ENCODE measurements at regions of chr5 and their contacts with region 1.

Region 1: DNA sequence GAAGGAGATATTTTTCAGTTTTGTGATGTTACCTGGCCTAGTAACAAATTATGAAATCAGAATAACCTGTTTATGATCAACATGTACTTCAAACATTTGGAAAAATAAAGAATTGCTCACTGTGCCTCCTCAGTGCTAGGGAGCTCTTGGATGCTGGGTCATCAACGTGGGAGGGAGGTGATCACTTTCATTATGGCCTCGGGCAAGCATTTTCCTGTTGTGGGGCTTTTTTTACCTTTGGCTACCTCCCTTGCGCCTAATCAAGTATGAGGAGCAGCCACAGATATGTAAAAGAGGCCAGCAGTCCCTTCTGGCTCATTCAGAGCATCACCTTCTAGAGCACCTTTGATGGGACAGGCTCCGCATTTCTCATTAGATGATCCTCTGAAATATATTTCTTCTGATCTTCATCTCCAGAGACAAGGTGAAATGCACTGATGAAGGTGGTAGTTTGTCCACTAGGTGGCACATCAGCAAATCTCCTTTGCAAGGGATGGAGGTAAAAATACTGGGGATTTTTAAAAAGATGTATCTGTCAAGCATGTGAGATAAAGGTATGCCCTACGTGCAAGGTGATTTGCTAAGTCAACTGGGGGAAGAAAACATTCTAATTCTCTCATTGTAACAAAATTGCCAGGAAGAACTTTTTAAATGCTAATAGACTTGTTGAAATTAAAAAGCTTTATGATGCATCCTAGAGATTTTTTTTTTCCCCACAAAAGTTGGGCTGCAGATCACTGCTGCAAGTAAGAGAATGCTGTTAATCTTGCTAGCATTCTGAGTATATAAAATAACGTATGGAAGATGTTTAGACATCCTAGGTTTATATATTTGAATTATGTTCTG is 218.2 kb downstream of the MAST4 start:
- DNase-seq: peak; percentile 66
- H3K4me3 ChIP-seq: peak overlapping the region in 1 of 3 experiments; percentile 3
- H3K27ac ChIP-seq: no peak overlapping the region
- H3K4me1 ChIP-seq: peaks cover 6% of the 10 kb centered on the region
- H3K27me3 ChIP-seq: no peaks in the 10 kb centered on the region
- CTCF ChIP-seq: peak; percentile 73 to 78

Region 2: DNA sequence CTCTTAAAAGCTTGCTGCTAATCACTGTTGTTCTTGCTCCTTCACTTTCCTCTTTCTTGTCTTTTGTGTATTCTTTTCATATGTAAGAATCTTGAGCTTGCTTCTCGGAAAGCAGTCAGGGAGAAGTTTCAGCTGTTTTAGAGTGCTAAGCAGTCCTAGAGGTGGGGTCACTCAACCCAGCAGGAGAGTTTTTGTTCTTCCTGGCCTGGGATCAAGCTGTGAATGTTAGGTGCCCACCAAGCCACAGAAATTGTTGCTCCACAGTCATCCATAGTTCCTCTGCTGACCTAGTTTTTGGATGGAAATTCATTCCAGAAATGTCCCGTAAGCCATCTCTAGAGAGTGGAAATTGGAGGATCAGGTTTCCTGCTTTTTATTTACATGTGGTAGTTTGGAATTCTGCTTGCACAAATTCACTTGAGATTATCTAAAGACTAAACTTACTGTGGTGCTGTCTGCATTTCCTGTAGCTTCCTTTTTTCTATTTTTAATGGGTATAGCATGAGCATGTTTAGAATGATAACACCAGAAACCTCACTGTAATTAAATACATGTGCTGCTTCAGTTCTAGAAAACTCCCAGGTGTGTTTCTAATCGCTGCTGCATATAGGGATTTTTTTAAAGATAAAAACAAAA is 109.5 kb before region 1 on chr5:
- CTCF ChIA-PET with region 1: no interaction called
- dilution Hi-C with region 1: no loop called
- in situ Hi-C with region 1: no loop called
- intact Hi-C with region 1: no loop called
- DNase-seq: no peak
- H3K4me3 ChIP-seq: no peak overlapping the region
- H3K27ac ChIP-seq: no peak overlapping the region
- H3K4me1 ChIP-seq: no peaks in the 10 kb centered on the region
- H3K27me3 ChIP-seq: peaks cover 2% of the 10 kb centered on the region
- CTCF ChIP-seq: no peak

Region 3: GRCh38 chr5:66856041-66856805 is 41.9 kb after region 1 on chr5:
- CTCF ChIA-PET with region 1: no interaction called
- dilution Hi-C with region 1: no loop called
- in situ Hi-C with region 1: loop called in 1 of 2 experiments (anchors 5 kb)
- intact Hi-C with region 1: no loop called
- DNase-seq: no peak
- H3K4me3 ChIP-seq: no peak overlapping the region
- H3K27ac ChIP-seq: no peak overlapping the region
- H3K4me1 ChIP-seq: peaks cover 14% of the 10 kb centered on the region
- H3K27me3 ChIP-seq: no peaks in the 10 kb centered on the region
- CTCF ChIP-seq: no peak

Region 4: DNA sequence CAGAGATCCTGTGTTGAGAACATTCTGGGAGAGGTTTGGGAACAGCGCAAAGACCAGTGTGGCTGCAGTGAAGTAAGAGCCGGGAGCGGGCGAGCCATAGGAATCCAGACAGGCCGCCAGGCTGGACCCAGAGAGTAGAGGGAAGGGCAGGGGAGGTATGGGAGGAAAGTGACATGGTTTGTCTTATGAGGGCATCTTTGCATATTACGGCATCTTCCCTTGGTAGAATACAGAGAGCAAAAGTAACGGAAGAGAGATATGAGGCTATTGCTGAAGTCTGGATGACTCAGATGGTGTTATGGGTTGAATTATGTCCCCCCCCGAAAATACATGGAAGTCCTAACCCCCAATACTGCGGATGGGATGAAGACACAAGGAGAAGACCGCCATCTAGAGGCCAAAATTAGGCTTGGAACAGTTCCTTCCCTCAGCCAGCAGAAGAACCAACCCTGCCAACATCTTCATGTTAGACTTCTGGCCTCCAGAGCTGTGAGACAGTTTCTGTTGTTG is 50.0 kb after region 1 on chr5:
- CTCF ChIA-PET with region 1: no interaction called
- dilution Hi-C with region 1: no loop called
- in situ Hi-C with region 1: loop called in 1 of 2 experiments (anchors 5 kb)
- intact Hi-C with region 1: loop called (anchors 1 kb)
- DNase-seq: peak; percentile 65
- H3K4me3 ChIP-seq: no peak overlapping the region
- H3K27ac ChIP-seq: no peak overlapping the region
- H3K4me1 ChIP-seq: peaks cover 11% of the 10 kb centered on the region
- H3K27me3 ChIP-seq: no peaks in the 10 kb centered on the region
- CTCF ChIP-seq: peak; percentile 60 to 73

Region 5: DNA sequence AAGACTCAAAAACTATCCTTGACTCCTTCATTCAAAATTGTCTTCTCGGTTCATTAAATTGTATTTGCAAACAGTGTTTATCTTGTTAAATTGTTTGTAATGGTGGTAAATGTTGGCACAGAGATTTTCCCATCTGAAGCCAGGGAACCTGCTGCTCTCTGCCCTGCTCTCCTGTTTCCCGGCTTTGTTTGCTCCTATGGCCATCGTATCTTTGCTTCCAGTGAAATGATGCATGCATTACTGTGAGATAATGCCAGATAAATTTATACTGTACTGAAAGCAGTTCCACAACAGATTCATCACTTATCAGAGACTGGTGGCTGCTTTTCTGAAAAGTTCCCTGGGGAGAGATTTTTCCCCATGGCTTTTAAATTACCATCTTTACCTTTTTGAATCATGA is 300.9 kb after region 1 on chr5:
- CTCF ChIA-PET with region 1: no interaction called
- dilution Hi-C with region 1: no loop called
- in situ Hi-C with region 1: loop called in 1 of 2 experiments (anchors 25 kb)
- intact Hi-C with region 1: no loop called
- DNase-seq: no peak
- H3K4me3 ChIP-seq: no peak overlapping the region
- H3K27ac ChIP-seq: no peak overlapping the region
- H3K4me1 ChIP-seq: no peaks in the 10 kb centered on the region
- H3K27me3 ChIP-seq: no peaks in the 10 kb centered on the region
- CTCF ChIP-seq: no peak

Measured in mammary epithelial cell (primary cell).